Activated T-helper 2 cell treated with anti-CD3 and anti-CD28 coated beads, Interferon-gamma antibody, Interleukin-2, Interleukin-4, amounts not matched to agents 10 μg/mL and 5 μg/mL and 100 μg/mL, durations not matched to agents 14 hours and 24 hours and 36 hours (primary cell): ENCODE measurements at regions of chr6 and their contacts with region 1.

Region 1: DNA sequence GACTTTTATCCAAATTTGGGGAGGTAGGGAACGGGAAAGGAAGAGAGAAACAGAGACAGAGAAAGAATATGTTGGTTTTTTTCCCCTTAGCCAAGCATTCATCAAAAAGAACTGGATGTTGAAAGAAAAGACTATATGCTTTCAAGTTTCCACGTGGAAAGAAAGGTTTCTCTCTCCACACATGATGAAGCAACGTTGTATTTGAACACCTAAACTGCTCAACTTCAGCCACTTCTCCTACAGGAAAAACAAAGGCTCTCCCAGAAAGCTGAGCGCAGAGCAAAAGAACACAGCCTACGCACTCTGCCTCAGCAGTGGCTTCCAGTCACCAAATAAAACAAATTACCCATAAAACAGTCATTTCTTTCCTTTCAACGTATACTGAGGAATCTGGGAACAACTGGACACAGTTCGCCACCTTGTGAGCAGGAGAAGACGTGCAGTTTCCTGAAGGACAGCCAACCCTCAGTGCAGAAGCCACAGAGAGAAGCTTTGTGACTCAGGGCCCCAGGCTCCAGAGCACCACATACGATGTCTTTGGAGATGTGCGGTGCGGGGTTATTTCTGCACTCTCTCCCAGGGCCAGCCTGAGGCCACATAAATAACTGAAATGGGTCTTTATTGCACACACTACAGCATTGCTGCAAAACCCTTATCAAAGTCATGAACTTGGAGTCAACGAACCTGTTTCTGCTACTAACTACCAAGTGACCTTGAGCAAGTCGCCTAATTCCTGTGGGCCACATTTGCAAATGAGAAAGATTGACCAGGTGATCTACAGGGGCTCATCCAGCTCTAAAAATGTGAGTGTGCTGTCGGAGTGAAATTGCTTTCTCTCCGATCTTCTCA is 10.1 kb downstream of the IL17F start:
- DNase-seq: no peak
- H3K4me3 Mint-ChIP-seq: no peak overlapping the region
- H3K27ac Mint-ChIP-seq: no peak overlapping the region
- H3K4me1 Mint-ChIP-seq: peaks cover 18% of the 10 kb centered on the region
- H3K27me3 Mint-ChIP-seq: peaks cover 72% of the 10 kb centered on the region

Region 2: DNA sequence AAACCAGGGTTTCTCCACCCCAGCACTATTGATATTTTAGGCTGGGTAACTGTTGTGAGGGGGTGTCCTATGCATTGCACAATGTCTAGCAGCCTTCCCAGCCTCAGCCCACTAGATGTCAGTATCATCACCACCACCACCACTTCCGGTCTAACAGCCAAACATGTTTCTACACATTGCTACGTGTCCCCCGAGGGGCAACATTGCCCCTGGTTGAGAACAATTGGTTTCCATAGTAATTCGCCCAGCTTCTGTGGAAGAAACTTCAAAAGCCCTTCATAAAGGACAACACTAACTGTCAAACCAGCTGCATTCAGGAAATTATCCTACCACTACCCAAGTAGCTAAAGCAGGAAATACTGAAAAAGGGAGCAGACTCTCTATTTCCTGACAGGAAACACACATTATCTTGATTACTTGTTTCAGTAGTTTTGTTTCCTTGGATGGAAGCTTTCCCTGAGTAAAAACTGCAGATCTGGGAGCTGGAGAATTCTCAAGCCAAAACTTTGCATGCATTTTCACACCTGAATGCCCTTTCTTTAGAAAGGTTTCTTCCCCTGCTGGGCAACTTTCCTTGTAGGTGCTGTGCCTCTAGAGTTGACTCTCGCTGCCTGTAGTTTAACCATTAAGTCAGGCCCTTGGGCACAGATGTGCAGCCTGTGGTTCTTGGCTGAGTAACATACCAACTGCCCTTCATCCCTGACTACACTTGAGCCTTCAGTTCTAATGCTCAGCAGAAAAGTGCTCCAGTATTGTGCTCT is 170.4 kb before region 1 on chr6:
- intact Hi-C with region 1: loop called (anchors 10 kb)
- DNase-seq: peak; percentile 52
- H3K4me3 Mint-ChIP-seq: no peak overlapping the region
- H3K27ac Mint-ChIP-seq: peak overlapping the region; percentile 59
- H3K4me1 Mint-ChIP-seq: peaks cover 8% of the 10 kb centered on the region
- H3K27me3 Mint-ChIP-seq: peaks cover 21% of the 10 kb centered on the region

Region 3: DNA sequence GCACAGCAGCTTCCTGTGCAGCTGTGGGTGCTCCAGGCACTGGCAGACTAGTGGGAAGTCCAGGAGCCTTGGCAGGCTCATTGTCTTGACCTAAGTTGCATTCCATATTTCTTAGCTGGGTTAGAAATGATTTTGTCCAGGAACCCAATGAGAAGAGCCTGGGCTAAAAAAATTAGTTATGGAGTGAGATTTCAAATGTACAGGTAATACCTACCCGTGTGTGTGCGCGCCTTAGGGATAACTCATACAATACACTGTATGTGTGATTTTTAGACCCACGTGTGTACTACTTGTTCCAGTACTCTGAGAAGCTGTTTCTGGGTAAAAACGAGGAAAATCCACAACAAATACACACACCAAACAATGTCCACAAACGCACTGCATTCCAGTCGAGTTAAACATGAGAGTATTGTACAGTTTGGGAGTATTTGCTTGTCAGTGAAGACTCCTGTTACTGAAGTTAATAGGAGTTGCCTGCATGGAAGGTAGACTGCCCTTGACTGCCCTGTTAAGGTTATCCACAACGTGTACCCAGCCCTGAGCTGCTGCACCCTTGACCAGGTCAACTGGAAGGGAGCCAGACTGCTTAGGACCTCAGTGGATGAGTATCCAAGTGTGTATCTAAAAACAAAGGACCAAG is 129.1 kb after region 1 on chr6:
- intact Hi-C with region 1: no loop called
- DNase-seq: no peak
- H3K4me3 Mint-ChIP-seq: peak overlapping the region; percentile 99
- H3K27ac Mint-ChIP-seq: peak overlapping the region; percentile 89
- H3K4me1 Mint-ChIP-seq: peaks cover 32% of the 10 kb centered on the region
- H3K27me3 Mint-ChIP-seq: no peaks in the 10 kb centered on the region